Head of caudate nucleus (tissue), 42 donors: ENCODE measurements at regions of chr16 and their contacts with region 1.

Region 1: GRCh38 chr16:4506450-4506849 is 30.3 kb downstream of the HMOX2 start:
- DNase-seq: peak in 39 of 42 donors; percentile 42 to 89 (median 76)

Region 2: DNA sequence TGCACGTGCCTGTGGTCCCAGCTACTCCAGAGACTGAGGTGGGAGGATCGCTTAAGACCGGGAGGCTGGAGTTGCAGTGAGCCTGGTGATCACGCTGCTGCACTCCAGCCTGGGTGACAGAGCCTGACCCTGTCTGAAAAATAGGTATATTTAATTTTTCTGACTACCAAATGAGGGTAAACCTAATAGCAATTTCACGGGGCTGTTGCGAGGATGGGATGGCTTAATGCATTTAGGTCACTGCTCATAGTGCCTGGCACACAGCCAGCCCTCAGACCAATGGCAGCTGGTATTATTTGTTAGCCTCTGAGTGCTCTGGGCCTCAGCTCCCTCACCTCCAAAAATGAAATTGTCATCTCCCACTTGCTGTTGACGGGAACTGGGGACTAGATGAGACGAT is 38.0 kb after region 1 on chr16:
- intact Hi-C with region 1: loop called (anchors 5 kb)
- DNase-seq: no peak